CD4-positive, alpha-beta memory T cell (primary cell): ENCODE measurements at regions of chr10 and their contacts with region 1.

Region 1: GRCh38 chr10:8245131-8245813 is 190.8 kb downstream of the GATA3 start:
- DNase-seq: peak in 4 of 5 donors; percentile 55 to 64 (median 59)
- H3K4me3 ChIP-seq: peak overlapping the region in 1 of 2 donors; percentile 34
- H3K4me3 Mint-ChIP-seq: peak overlapping the region; percentile 51 to 90 (median 74)
- H3K27ac ChIP-seq: peak overlapping the region; percentile 41
- H3K27ac Mint-ChIP-seq: peak overlapping the region; percentile 75 to 95 (median 93)
- H3K4me1 ChIP-seq: peaks cover 52% of the 10 kb centered on the region
- H3K4me1 Mint-ChIP-seq: peaks cover 39 to 74% (median 55%) of the 10 kb centered on the region in 4 donors
- H3K27me3 ChIP-seq: no peaks in the 10 kb centered on the region
- H3K27me3 Mint-ChIP-seq: no peaks in the 10 kb centered on the region

Region 2: DNA sequence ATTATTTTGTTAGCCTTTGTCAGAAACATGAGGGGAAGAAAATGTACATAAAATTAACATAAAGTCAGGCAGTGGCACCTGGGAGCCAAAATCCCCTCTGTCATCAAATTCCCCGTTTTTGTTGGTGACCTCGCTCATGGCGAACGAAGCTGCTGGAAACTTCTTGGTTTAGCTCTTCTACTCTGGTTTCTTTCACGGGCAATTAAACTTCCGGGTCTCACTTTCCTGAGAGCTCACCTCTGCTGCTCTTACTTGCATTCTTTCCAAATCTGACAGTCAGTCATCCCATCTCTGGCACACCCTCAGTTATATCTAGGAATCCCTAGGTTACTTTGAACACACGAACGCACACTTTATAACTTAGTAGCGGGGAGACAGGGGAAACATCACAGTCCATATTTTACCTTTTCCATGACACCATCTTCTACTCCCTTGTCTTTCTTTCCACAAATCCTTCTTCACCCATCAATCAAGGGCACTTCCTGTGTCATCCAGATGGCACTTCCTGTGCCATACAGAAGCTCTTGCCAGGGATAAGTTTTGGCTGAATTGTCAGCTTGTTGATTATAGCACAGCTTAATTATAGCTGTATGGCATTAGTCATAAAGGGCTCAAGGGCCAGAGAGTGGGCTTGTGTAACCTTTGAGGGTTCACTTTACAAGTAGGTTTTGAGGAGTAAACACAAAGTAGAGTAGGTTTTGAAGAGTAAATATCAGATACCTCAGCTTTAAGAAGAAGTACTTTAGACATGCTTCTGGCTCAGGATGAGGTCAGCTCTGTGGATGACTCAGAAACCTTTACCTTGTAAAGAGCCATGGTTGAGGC is 85.7 kb before region 1 on chr10:
- CTCF ChIA-PET with region 1: no interaction called
- POLR2A ChIA-PET with region 1: no interaction called
- intact Hi-C with region 1: no loop called
- DNase-seq: no peak
- H3K4me3 ChIP-seq: no peak overlapping the region
- H3K4me3 Mint-ChIP-seq: no peak overlapping the region
- H3K27ac ChIP-seq: no peak overlapping the region
- H3K27ac Mint-ChIP-seq: peak overlapping the region in 1 of 7 donors; percentile 65
- H3K4me1 ChIP-seq: no peaks in the 10 kb centered on the region
- H3K4me1 Mint-ChIP-seq: peaks cover 0 to 5% (median 0%) of the 10 kb centered on the region in 4 donors
- H3K27me3 ChIP-seq: no peaks in the 10 kb centered on the region
- H3K27me3 Mint-ChIP-seq: peaks cover 1 to 5% of the 10 kb centered on the region in 2 donors

Region 3: GRCh38 chr10:8183241-8183704 is 62.0 kb before region 1 on chr10:
- CTCF ChIA-PET with region 1: interaction called, 3 read pairs
- POLR2A ChIA-PET with region 1: interaction called, 3 read pairs
- intact Hi-C with region 1: loop called (anchors 2 kb)
- DNase-seq: peak; percentile 64 to 83 (median 76)
- H3K4me3 ChIP-seq: no peak overlapping the region
- H3K4me3 Mint-ChIP-seq: peak overlapping the region; percentile 57 to 86 (median 64)
- H3K27ac ChIP-seq: peak overlapping the region; percentile 60
- H3K27ac Mint-ChIP-seq: peak overlapping the region; percentile 87 to 98 (median 90)
- H3K4me1 ChIP-seq: peaks cover 34% of the 10 kb centered on the region
- H3K4me1 Mint-ChIP-seq: peaks cover 23 to 44% (median 35%) of the 10 kb centered on the region in 4 donors
- H3K27me3 ChIP-seq: no peaks in the 10 kb centered on the region
- H3K27me3 Mint-ChIP-seq: no peaks in the 10 kb centered on the region